ENCODE measurements at regions of chr22 and their contacts with region 1.

Region 1: DNA sequence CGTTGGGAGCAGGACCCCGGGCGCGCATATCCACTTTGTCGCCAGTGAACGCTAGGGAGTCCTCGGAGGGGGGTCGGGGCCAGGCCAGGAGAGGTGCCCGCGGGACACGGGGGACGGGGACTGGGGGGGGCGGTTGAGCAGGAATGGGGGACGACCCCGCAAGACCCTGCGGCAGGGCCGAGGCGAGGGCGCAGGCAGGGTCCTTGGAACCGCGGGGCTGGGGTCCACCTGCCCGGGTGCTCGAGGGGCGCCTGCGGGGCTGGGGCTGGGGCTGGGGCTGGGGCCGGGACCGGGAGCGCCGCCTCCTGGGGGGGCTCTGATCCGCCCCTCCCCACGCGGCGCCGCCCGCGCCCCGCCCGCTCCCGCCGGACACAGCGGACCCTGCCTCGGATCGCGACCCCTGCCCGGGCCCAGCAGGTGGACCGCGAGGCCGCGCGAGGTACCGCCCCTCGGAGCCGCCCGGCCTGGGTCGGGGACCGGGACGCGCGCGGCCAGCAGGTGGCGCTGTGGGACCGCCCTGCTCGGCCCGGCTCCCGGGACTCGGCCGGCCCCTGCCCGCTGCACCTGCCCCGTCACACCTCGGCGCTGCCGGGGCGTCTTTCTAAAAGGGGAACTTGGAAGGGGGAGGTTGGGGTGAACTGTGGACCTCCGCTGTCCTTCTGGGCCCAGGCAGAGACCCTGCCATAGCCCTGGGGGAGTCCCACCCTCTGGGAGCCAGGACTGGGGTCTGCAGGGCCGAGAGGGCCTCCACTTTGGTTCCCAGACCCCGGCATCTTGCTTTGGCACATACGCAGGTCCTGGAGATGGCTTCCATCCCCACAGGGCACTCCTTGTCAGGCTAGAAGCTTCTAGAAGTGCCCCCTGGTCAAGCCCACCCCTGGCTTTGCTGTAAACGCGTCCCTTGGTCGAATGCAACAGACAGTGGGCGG is 11.0 kb downstream of the CRELD2 start:
- DNase-seq: peak; percentile 60
- H3K4me3 ChIP-seq: peak overlapping the region; percentile 27
- H3K27ac ChIP-seq: no peak overlapping the region
- H3K4me1 ChIP-seq: peaks cover 58% of the 10 kb centered on the region
- H3K27me3 ChIP-seq: peaks cover 10% of the 10 kb centered on the region
- CTCF ChIP-seq: peak; percentile 93

Region 2: GRCh38 chr22:49906071-49906932 is 23.2 kb before region 1 on chr22:
- intact Hi-C with region 1: no loop called
- DNase-seq: no peak
- H3K4me3 ChIP-seq: no peak overlapping the region
- H3K27ac ChIP-seq: no peak overlapping the region
- H3K4me1 ChIP-seq: peaks cover 11% of the 10 kb centered on the region
- H3K27me3 ChIP-seq: no peaks in the 10 kb centered on the region
- CTCF ChIP-seq: no peak

Region 3: GRCh38 chr22:49992921-49993648 is 63.6 kb after region 1 on chr22:
- intact Hi-C with region 1: loop called (anchors 10 kb)
- DNase-seq: peak; percentile 61
- H3K4me3 ChIP-seq: no peak overlapping the region
- H3K27ac ChIP-seq: no peak overlapping the region
- H3K4me1 ChIP-seq: peaks cover 7% of the 10 kb centered on the region
- H3K27me3 ChIP-seq: no peaks in the 10 kb centered on the region
- CTCF ChIP-seq: peak; percentile 81

Region 4: GRCh38 chr22:50030297-50031188 is 101.1 kb after region 1 on chr22:
- intact Hi-C with region 1: loop called (anchors 10 kb)
- DNase-seq: peak; percentile 71
- H3K4me3 ChIP-seq: peak overlapping the region; percentile 19
- H3K27ac ChIP-seq: no peak overlapping the region
- H3K4me1 ChIP-seq: peaks cover 9% of the 10 kb centered on the region
- H3K27me3 ChIP-seq: peaks cover 87% of the 10 kb centered on the region
- CTCF ChIP-seq: peak; percentile 93

Region 5: GRCh38 chr22:50169774-50170341 is 240.4 kb after region 1 on chr22:
- intact Hi-C with region 1: no loop called
- DNase-seq: no peak
- H3K4me3 ChIP-seq: peak overlapping the region; percentile 61
- H3K27ac ChIP-seq: no peak overlapping the region
- H3K4me1 ChIP-seq: peaks cover 13% of the 10 kb centered on the region
- H3K27me3 ChIP-seq: peaks cover 58% of the 10 kb centered on the region
- CTCF ChIP-seq: no peak

Measured in left ventricle myocardium inferior (tissue), 1 donor.